ENCODE measurements at regions of chr7 and their contacts with region 1.

Region 1: GRCh38 chr7:24381894-24382505 is 98.0 kb downstream of the NPY start:
- DNase-seq: peak; percentile 70
- CTCF ChIP-seq: peak; percentile 49

Region 2: DNA sequence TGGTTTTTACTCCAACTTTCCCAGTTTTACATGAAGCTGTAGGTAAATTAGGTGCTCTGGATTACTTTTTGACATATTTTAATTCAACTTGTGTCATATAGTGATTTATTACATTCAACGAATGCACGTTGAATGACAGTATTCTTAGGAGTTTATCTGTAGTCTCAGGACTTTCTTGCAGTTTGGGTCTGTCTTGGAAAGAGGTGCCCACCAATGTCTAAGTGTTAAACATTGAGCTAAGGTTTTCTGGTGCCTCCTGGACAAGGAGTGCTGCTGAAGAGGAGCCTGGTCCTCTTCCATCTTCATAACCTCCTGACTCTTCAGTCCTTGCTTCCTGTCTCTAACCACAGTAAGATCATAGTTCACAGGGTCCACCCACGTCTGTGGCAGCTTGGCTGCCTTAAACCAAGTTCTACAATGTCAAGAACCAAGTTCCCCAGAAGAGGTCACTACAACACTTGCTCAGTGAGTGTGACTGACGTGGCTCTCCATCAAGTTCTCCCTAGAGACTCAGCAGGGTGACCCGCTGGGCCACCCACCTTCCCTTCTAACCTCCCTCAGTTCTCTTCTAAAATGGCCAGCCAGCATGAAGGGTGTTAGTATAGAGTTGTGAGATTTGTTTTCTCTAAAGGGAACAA is 91.9 kb before region 1 on chr7:
- CTCF ChIA-PET with region 1: interaction called, 33 read pairs
- POLR2A ChIA-PET with region 1: no interaction called
- DNase-seq: peak; percentile 81
- CTCF ChIP-seq: peak; percentile 57

Region 3: DNA sequence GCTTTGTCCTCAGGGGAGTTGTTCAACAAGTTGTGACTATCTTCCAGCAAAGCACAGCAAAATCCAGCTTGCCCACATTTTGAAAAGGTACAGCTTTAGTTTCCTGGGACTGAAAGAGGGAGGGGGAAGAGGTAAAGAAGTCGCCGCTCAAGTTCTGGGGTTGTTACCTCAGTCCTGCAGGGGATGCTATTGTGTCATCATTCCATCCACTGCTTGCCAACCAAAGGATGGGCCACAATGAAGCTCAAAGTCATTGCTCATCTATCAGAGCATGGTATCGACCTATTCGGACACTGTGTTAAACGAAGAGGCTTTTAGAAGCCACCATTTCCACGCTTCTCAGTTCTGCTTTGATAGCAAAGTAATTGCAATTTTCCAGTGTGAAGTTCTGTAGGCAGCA is 63.7 kb before region 1 on chr7:
- CTCF ChIA-PET with region 1: interaction called, 10 read pairs
- POLR2A ChIA-PET with region 1: no interaction called
- DNase-seq: peak; percentile 46
- CTCF ChIP-seq: peak; percentile 10

Region 4: GRCh38 chr7:24365606-24366005 is 16.4 kb before region 1 on chr7:
- CTCF ChIA-PET with region 1: interaction called, 27 read pairs
- POLR2A ChIA-PET with region 1: no interaction called
- DNase-seq: no peak
- CTCF ChIP-seq: no peak

Region 5: DNA sequence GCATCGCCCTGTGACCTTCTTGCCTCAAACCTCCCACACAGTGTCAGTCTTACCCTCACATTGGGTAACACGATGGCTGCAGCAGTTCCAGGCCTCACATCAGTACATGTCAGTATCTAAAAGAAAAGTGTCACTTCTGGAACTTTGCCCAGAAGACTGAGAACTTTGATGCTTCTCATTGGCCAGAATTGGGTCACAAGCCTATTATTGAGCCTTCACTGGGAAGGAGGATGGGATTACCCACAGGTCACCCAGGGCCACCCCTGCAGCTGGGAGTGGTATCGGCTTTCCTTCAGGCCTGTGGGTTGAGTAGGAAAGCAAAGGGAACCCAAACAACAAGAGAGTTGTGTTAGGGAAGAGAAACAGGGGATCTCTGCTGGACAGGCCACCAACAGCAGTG is 13.5 kb after region 1 on chr7:
- CTCF ChIA-PET with region 1: interaction called, 20 read pairs
- POLR2A ChIA-PET with region 1: no interaction called
- DNase-seq: no peak
- CTCF ChIP-seq: no peak

Region 6: GRCh38 chr7:25060487-25061055 is 678.6 kb after region 1 on chr7:
- CTCF ChIA-PET with region 1: no interaction called
- POLR2A ChIA-PET with region 1: no interaction called
- DNase-seq: no peak
- CTCF ChIP-seq: no peak

Measured in GM10248 (cell line).